Caco-2 (cell line): ENCODE measurements at regions of chr1 and their contacts with region 1.

Region 1: GRCh38 chr1:152869808-152870419 is 8.2 kb upstream of the SMCP start:
- DNase-seq: peak; percentile 74 to 78
- H3K4me3 ChIP-seq: no peak overlapping the region
- H3K4me3 Mint-ChIP-seq: no peak overlapping the region
- H3K27ac Mint-ChIP-seq: no peak overlapping the region
- H3K4me1 ChIP-seq: no peaks in the 10 kb centered on the region
- H3K4me1 Mint-ChIP-seq: no peaks in the 10 kb centered on the region
- H3K27me3 ChIP-seq: 0 out of 2 replicates have a peak, but pooled peaks cover 1% of the 10 kb centered on the region
- H3K27me3 Mint-ChIP-seq: peaks cover 6% of the 10 kb centered on the region
- CTCF ChIP-seq: peak; percentile 79 to 88

Region 2: DNA sequence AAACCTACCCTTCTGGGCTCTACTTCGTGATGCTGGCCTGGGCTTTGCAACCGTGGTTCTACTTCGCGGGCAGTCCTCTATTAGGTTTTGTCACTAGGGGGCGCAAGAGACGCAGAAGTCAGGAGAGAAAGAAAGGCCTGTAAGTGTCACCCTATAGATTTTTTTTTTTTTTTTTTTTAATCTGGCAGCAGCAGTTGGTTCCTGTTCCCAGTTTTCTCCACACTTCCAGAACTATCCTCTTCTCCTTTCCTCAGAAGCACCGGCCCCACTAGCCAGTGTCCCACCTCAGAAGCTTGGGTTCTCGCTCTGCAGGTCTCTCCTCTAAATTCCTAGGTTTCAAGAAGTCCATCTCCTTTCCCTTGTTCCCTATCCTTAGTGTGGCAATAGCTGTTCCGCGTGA is 215.8 kb before region 1 on chr1:
- CTCF ChIA-PET with region 1: no interaction called
- POLR2A ChIA-PET with region 1: no interaction called
- intact Hi-C with region 1: loop called (anchors 2 kb)
- DNase-seq: peak; percentile 72 to 83
- H3K4me3 ChIP-seq: no peak overlapping the region
- H3K4me3 Mint-ChIP-seq: no peak overlapping the region
- H3K27ac Mint-ChIP-seq: no peak overlapping the region
- H3K4me1 ChIP-seq: no peaks in the 10 kb centered on the region
- H3K4me1 Mint-ChIP-seq: no peaks in the 10 kb centered on the region
- H3K27me3 ChIP-seq: no peaks in the 10 kb centered on the region; the same call in none of the 2 replicates
- H3K27me3 Mint-ChIP-seq: peaks cover 12% of the 10 kb centered on the region
- CTCF ChIP-seq: peak; percentile 66 to 91

Region 3: GRCh38 chr1:152926091-152926490 is 56.2 kb after region 1 on chr1:
- CTCF ChIA-PET with region 1: no interaction called
- POLR2A ChIA-PET with region 1: no interaction called
- intact Hi-C with region 1: loop called (anchors 1 kb)
- DNase-seq: peak in 1 of 2 experiments; percentile 19
- H3K4me3 ChIP-seq: no peak overlapping the region
- H3K4me3 Mint-ChIP-seq: no peak overlapping the region
- H3K27ac Mint-ChIP-seq: no peak overlapping the region
- H3K4me1 ChIP-seq: no peaks in the 10 kb centered on the region
- H3K4me1 Mint-ChIP-seq: peaks cover 7% of the 10 kb centered on the region
- H3K27me3 ChIP-seq: no peaks in the 10 kb centered on the region
- H3K27me3 Mint-ChIP-seq: peaks cover 9% of the 10 kb centered on the region
- CTCF ChIP-seq: peak; percentile 20 to 34

Region 4: GRCh38 chr1:153032677-153033308 is 162.9 kb after region 1 on chr1:
- CTCF ChIA-PET with region 1: no interaction called
- POLR2A ChIA-PET with region 1: no interaction called
- intact Hi-C with region 1: loop called (anchors 5 kb)
- DNase-seq: peak in 1 of 2 experiments; percentile 37
- H3K4me3 ChIP-seq: no peak overlapping the region
- H3K4me3 Mint-ChIP-seq: no peak overlapping the region
- H3K27ac Mint-ChIP-seq: no peak overlapping the region
- H3K4me1 ChIP-seq: no peaks in the 10 kb centered on the region
- H3K4me1 Mint-ChIP-seq: no peaks in the 10 kb centered on the region
- H3K27me3 ChIP-seq: no peaks in the 10 kb centered on the region
- H3K27me3 Mint-ChIP-seq: no peaks in the 10 kb centered on the region
- CTCF ChIP-seq: peak in 1 of 2 experiments; percentile 14

Region 5: GRCh38 chr1:153192697-153193096 is 322.8 kb after region 1 on chr1:
- CTCF ChIA-PET with region 1: interaction called, 27 read pairs
- POLR2A ChIA-PET with region 1: no interaction called
- intact Hi-C with region 1: loop called (anchors 1 kb)
- DNase-seq: peak; percentile 46 to 57
- H3K4me3 ChIP-seq: no peak overlapping the region
- H3K4me3 Mint-ChIP-seq: no peak overlapping the region
- H3K27ac Mint-ChIP-seq: no peak overlapping the region
- H3K4me1 ChIP-seq: no peaks in the 10 kb centered on the region
- H3K4me1 Mint-ChIP-seq: no peaks in the 10 kb centered on the region
- H3K27me3 ChIP-seq: no peaks in the 10 kb centered on the region; the same call in 1 of the 2 replicates
- H3K27me3 Mint-ChIP-seq: peaks cover 23% of the 10 kb centered on the region
- CTCF ChIP-seq: peak in 1 of 2 experiments; percentile 65

Region 6: GRCh38 chr1:153220606-153221303 is 350.8 kb after region 1 on chr1:
- CTCF ChIA-PET with region 1: no interaction called
- POLR2A ChIA-PET with region 1: no interaction called
- intact Hi-C with region 1: loop called (anchors 1 kb)
- DNase-seq: no peak
- H3K4me3 ChIP-seq: no peak overlapping the region
- H3K4me3 Mint-ChIP-seq: no peak overlapping the region
- H3K27ac Mint-ChIP-seq: no peak overlapping the region
- H3K4me1 ChIP-seq: no peaks in the 10 kb centered on the region
- H3K4me1 Mint-ChIP-seq: no peaks in the 10 kb centered on the region
- H3K27me3 ChIP-seq: no peaks in the 10 kb centered on the region; the same call in 1 of the 2 replicates
- H3K27me3 Mint-ChIP-seq: peaks cover 26% of the 10 kb centered on the region
- CTCF ChIP-seq: no peak